ENCODE measurements at regions of chr9 and their contacts with region 1.

Region 1: DNA sequence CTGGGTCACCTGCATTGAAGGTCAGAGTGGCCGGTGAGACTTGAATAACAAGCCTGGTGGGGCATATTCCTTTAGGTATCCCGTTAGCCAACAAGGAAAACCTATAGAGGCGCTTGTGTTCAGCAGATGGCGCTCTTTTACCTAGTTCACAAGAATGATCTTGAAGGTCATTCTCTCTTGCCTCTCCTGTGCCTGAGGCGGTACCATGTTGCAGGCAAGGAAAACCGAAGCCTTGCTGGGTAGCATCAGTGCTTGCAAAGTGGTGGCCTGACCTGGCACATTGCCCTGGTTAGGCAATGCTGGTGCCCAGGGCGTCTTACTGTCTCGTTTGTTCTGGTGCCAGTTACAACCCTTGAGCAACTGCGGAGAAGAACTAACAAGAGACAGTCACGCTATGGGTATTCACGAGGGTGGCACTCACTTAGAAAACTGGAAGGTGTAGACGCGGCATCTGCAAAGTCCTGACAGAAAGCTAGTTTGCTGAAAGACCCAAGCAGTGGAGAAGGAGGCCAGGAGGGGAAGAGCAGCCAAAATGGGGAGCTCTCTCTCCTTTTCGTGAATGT is 56.7 kb downstream of the AOPEP start:
- DNase-seq: peak; percentile 64
- ATAC-seq: peak; percentile 99
- H3K4me3 ChIP-seq: no peak overlapping the region; a peak in 1 of 4 replicates
- H3K27ac ChIP-seq: peak overlapping the region; percentile 85
- H3K4me1 ChIP-seq: peaks cover 23% of the 10 kb centered on the region
- H3K27me3 ChIP-seq: no peaks in the 10 kb centered on the region
- CTCF ChIP-seq: peak; percentile 74

Region 2: DNA sequence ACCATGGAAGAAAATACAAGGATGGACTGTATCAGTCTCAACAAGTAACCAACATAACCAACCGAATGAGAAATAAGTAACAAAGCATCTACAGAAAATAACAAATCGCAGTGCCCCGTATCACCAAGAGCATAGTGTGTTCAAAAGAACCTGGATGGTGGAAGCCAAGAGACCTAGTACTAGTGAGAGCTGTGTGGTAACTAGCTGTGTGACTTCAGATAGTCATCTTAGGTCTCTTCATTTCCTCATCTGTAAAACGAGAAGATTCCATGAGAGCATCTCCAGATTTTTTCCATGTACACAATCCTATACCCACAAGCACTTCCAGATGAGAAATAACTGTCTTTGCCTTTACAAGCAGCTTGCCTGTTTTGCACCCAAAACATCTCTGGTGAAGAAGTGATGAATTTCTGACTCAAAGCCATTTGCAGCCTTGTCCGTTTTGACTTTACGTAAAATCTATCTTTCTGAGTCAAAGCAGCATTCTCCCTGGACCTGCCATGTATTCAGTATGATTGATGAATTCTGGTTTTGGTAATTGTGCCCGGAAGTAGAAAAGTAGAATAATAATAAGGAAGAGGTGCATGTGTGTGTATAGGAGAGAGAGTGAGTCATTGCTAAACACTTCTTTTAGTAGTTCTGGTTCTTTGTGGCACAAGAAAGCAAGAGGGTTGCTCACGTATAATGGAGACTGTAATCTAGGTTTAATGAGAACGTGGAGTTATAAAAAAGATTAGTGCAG is 15.7 kb before region 1 on chr9:
- CTCF ChIA-PET with region 1: no interaction called
- POLR2A ChIA-PET with region 1: no interaction called
- in situ Hi-C with region 1: no loop called
- intact Hi-C with region 1: no loop called
- DNase-seq: no peak
- ATAC-seq: no peak
- H3K4me3 ChIP-seq: no peak overlapping the region
- H3K27ac ChIP-seq: no peak overlapping the region
- H3K4me1 ChIP-seq: no peaks in the 10 kb centered on the region
- H3K27me3 ChIP-seq: no peaks in the 10 kb centered on the region
- CTCF ChIP-seq: no peak

Region 3: DNA sequence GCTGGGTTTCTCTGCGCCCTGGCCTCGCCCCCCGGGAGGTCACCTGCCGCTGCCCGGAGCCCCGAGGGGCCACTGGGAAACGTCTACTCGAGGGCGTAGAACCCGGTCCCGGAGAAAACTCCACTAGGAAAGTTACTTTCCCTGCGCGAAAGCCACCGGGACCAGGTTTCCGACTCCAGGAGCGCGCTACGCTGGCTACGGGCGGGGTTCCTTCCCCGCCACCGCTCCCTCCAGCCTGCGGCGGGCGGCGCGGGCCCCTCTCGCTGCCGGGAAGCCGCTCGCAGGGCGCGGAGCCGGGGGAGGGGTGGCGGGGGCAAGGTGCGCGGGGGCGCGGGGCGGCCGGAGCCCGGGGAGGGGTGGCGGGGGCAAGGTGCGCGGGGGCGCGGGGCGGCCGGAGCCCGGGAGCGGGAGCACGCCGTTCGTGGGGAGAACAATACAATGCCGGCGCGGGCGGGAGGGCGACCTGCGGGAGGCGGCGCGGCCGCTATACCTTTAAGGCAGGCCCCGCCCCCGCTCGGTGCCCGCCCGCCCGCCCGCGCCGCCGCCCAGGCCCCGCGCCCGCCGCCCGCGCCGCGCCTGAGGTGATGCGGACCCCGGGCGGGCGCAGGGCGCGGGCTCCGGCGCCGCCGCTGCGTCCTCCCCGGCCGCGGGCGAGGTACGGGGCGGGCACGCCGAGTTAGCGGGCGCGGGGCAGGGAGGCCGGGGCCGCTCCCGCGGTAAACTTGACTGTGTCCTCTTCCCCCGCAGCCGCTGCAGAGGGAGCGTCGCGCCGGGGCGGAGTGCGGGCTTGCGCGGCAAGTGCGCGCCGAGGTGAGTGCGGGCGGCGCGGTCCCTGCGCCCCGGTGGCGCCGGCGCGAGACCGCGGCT is 221.5 kb after region 1 on chr9:
- CTCF ChIA-PET with region 1: interaction called, 3 read pairs
- POLR2A ChIA-PET with region 1: no interaction called
- in situ Hi-C with region 1: no loop called
- intact Hi-C with region 1: loop called (anchors 5 kb)
- DNase-seq: no peak
- ATAC-seq: peak; percentile 87
- H3K4me3 ChIP-seq: peak overlapping the region; percentile 71
- H3K27ac ChIP-seq: peak overlapping the region; percentile 92
- H3K4me1 ChIP-seq: peaks cover 19% of the 10 kb centered on the region
- H3K27me3 ChIP-seq: no peaks in the 10 kb centered on the region
- CTCF ChIP-seq: no peak

Region 4: GRCh38 chr9:95048225-95049087 is 265.3 kb after region 1 on chr9:
- CTCF ChIA-PET with region 1: no interaction called
- POLR2A ChIA-PET with region 1: no interaction called
- in situ Hi-C with region 1: no loop called
- intact Hi-C with region 1: loop called (anchors 10 kb)
- DNase-seq: no peak
- ATAC-seq: peak; percentile 80
- H3K4me3 ChIP-seq: peak overlapping the region; percentile 53 to 54
- H3K27ac ChIP-seq: peak overlapping the region; percentile 86
- H3K4me1 ChIP-seq: peaks cover 51% of the 10 kb centered on the region
- H3K27me3 ChIP-seq: no peaks in the 10 kb centered on the region
- CTCF ChIP-seq: no peak

Measured in Panc1 (cell line).